ENCODE measurements at regions of chr22 and their contacts with region 1.

Region 1: GRCh38 chr22:21972293-21972779 is 10.3 kb downstream of the TOP3B start:
- DNase-seq: peak; percentile 24
- H3K4me3 Mint-ChIP-seq: no peak overlapping the region
- H3K27ac Mint-ChIP-seq: no peak overlapping the region
- H3K4me1 Mint-ChIP-seq: no peaks in the 10 kb centered on the region
- H3K27me3 Mint-ChIP-seq: no peaks in the 10 kb centered on the region

Region 2: DNA sequence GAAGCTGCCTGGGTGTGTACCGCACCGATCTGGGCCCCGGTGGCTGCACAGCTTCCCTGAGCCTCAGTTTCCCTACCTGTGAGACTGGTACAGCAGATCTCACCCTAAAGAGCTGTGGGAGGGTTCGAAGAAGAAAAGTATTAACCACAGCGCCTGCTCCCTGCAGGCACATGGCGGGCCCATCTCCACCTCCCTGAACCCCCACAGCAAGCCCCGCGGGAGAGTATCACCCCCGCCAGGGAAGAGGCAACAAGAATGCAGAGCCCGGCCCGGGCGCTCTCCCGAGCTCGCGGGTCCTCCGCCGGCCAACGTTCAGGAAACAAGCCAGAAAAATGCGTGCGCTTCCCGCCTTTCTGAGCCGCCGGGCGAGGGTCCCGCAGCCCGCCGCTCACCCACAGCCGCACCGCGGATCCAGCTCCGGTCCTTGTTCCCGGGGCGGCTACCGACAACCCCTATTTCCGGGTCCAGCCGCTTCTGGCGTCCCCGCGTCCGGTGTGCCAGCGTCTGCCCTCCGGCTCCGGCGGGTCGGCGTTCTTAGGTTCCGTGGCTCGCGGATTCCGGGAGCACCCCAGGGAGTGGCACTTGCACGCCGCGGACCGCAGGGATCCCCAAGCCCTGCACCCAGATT is 10.1 kb after region 1 on chr22 and contains the start of gene TOP3B:
- intact Hi-C with region 1: loop called (anchors 1 kb)
- DNase-seq: peak; percentile 79
- H3K4me3 Mint-ChIP-seq: peak within 1 kb of the TSS; percentile 89
- H3K27ac Mint-ChIP-seq: peak within 1 kb of the TSS; percentile 52
- H3K4me1 Mint-ChIP-seq: peaks cover 15% of the 10 kb centered on the region
- H3K27me3 Mint-ChIP-seq: no peaks in the 10 kb centered on the region
- total RNA-seq, gene TOP3B: 48.4 and 51.9 TPM in 2 replicates

Measured in activated T-helper 1 cell treated with anti-CD3 and anti-CD28 coated beads, Interleukin-12 subunit alpha, Interleukin-12 subunit beta, Interleukin-2, Interleukin-4 antibody, amounts not matched to agents 30 ng/mL and 10 ng/mL and 1 ng/mL, durations not matched to agents 14 hours and 24 hours and 36 hours (primary cell).